Mammary epithelial cell (primary cell): ENCODE measurements at regions of chr10 and their contacts with region 1.

Region 1: GRCh38 chr10:124530215-124530665 is 68.6 kb downstream of the LHPP start:
- DNase-seq: peak; percentile 66
- H3K4me3 ChIP-seq: no peak overlapping the region
- H3K27ac ChIP-seq: no peak overlapping the region
- H3K4me1 ChIP-seq: peaks cover 15% of the 10 kb centered on the region
- H3K27me3 ChIP-seq: no peaks in the 10 kb centered on the region
- CTCF ChIP-seq: peak; percentile 91 to 97

Region 2: DNA sequence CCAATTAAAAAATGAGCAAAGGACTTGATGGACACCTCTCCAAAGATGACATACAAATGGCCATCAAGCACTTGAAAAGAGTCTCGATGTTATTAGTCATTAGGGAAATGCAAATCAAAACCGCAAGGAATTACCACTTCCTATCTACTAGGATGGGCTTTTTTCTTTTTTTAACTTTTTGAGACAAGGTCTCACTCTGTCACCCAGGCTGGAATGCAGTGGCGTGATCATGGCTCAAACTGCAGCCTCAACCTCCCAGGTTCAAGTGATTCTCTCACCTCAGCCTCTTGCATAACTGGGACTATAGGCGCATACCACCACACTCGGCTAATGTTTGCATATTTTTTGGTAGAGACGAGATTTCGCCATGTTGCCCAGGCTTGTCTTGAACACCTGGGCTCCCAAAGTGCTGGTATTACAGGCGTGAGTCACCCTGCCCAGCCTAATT is 94.0 kb before region 1 on chr10:
- CTCF ChIA-PET with region 1: no interaction called
- dilution Hi-C with region 1: no loop called
- in situ Hi-C with region 1: no loop called
- intact Hi-C with region 1: no loop called
- DNase-seq: peak; percentile 99
- H3K4me3 ChIP-seq: no peak overlapping the region
- H3K27ac ChIP-seq: peak overlapping the region; percentile 50
- H3K4me1 ChIP-seq: peaks cover 33% of the 10 kb centered on the region
- H3K27me3 ChIP-seq: no peaks in the 10 kb centered on the region
- CTCF ChIP-seq: no peak

Region 3: DNA sequence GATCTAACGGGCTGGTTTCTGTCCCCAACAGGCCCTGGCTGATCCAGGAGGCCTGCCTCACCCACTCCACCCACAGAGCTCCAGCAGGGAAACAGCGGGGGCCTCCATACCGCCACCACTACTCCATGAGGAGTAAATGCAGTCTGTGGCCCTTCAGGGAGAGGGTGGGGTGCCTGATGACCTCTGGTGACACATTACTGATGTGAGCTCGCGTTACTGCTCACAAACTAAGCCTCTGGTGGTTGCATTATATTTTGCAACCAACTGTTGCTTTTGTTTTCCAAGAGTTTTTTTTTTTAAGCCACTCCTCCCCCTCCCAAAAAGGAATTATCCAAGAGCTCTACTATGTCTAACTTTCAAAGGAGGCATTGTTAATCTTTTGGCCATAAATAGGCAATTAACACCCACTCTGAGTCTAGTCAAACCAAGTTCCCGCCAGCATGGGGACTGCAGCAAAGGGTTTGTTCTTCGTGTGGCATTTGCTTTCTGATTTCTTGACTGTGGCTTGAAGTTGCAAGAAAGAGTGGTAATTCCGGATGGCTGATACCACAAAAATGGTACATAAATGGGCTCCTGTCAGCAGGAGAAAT is 141.3 kb after region 1 on chr10:
- CTCF ChIA-PET with region 1: no interaction called
- dilution Hi-C with region 1: no loop called
- in situ Hi-C with region 1: no loop called
- intact Hi-C with region 1: loop called (anchors 5 kb)
- DNase-seq: peak; percentile 72
- H3K4me3 ChIP-seq: no peak overlapping the region
- H3K27ac ChIP-seq: no peak overlapping the region
- H3K4me1 ChIP-seq: peaks cover 17% of the 10 kb centered on the region
- H3K27me3 ChIP-seq: no peaks in the 10 kb centered on the region
- CTCF ChIP-seq: peak; percentile 48 to 57

Region 4: DNA sequence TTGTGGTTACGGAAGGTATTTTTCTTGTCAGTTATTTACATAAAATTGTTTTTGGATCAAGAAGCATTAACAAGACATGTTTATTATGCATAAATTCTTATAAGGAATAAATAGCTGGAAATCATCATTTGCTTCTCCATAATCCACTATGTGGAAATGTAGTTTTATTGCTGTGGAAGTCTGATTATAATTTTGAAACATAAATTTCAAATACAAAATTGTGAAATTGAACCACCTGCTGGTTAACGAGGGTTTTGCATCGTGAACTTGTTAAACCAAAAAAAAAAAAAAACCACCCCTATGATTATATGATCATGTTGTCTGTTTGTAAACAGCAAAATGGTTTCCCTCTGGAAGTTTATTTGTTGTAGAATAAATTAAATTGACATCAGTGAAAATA is 297.2 kb after region 1 on chr10:
- CTCF ChIA-PET with region 1: no interaction called
- dilution Hi-C with region 1: no loop called
- in situ Hi-C with region 1: no loop called
- intact Hi-C with region 1: loop called (anchors 1 kb)
- DNase-seq: no peak
- H3K4me3 ChIP-seq: no peak overlapping the region
- H3K27ac ChIP-seq: no peak overlapping the region
- H3K4me1 ChIP-seq: peaks cover 5% of the 10 kb centered on the region
- H3K27me3 ChIP-seq: no peaks in the 10 kb centered on the region
- CTCF ChIP-seq: peak; percentile 54 to 61

Region 5: DNA sequence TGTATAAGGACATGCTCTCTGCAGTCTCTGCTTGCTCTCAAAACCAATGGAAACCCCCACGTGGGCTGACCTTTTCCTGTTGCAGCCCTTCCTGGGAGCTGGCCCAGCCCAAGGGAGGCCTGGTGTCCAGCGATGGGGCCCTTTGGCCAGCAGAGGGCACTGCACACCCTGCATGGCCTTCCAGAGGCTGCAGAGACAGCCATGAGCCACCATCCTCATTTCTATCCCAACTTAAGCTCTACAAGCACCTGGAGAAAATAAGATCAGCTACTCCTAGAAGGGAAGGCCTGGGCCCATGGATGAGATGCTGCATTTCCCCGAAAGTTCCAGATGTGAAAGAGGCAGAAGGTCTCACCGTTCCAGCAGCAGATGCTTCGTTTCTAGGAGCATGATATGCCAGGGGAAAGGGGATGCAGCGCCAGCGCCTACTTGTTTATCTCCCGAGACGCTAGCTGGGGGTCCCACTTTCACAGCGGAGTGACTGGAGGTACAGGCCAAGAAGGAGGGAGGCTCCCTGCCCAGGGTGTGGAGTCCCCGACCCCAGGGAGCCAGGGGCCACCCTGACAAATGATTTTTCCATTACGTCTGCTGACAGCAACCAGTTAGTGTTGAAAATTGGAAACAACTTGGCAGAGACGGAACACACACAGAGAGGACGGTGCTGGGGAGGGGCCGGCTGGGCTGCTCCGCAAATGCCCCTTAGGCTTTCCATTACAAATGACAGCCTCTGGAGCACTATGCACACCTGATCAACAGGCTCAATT is 518.0 kb after region 1 on chr10:
- CTCF ChIA-PET with region 1: no interaction called
- dilution Hi-C with region 1: no loop called
- in situ Hi-C with region 1: no loop called
- intact Hi-C with region 1: loop called (anchors 5 kb)
- DNase-seq: peak; percentile 74
- H3K4me3 ChIP-seq: no peak overlapping the region
- H3K27ac ChIP-seq: peak overlapping the region; percentile 45
- H3K4me1 ChIP-seq: peaks cover 34% of the 10 kb centered on the region
- H3K27me3 ChIP-seq: no peaks in the 10 kb centered on the region
- CTCF ChIP-seq: peak; percentile 96